ENCODE measurements at regions of chr5 and their contacts with region 1.

Region 1: GRCh38 chr5:142548739-142549275 is 137.1 kb downstream of the FGF1 start:
- DNase-seq: peak; percentile 93
- H3K4me3 ChIP-seq: no peak overlapping the region
- CTCF ChIP-seq: peak; percentile 89

Region 2: GRCh38 chr5:142000703-142001484 is 547.9 kb before region 1 on chr5:
- in situ Hi-C with region 1: no loop called
- DNase-seq: no peak
- H3K4me3 ChIP-seq: no peak overlapping the region
- CTCF ChIP-seq: peak; percentile 43

Region 3: DNA sequence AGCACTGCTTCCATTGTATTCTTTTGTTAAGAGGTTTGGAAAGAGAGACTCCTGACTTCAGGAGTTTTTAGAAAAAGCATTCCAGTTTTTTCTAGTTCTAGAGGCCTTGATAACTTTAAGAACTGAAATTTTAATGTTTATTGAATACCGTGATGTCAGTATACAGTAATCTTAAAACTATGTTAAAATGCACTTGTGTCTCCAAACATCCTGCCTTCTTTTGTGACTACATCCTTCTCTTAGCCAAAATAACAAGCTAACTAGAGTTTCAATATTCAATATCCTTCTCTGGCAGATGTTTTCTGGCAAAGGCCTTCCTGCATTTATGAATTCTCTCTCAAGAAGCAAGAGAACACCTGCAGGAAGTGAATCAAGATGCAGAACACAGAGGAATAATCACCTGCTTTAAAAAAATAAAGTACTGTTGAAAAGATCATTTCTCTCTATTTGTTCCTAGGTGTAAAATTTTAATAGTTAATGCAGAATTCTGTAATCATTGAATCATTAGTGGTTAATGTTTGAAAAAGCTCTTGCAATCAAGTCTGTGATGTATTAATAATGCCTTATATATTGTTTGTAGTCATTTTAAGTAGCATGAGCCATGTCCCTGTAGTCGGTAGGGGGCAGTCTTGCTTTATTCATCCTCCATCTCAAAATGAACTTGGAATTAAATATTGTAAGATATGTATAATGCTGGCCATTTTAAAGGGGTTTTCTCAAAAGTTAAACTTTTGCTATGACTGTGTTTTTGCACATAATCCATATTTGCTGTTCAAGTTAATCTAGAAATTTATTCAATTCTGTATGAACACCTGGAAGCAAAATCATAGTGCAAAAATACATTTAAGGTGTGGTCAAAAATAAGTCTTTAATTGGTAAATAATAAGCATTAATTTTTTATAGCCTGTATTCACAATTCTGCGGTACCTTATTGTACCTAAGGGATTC is 397.1 kb before region 1 on chr5:
- in situ Hi-C with region 1: loop called (anchors 5 kb)
- DNase-seq: peak; percentile 80
- H3K4me3 ChIP-seq: no peak overlapping the region
- CTCF ChIP-seq: peak; percentile 73

Region 4: DNA sequence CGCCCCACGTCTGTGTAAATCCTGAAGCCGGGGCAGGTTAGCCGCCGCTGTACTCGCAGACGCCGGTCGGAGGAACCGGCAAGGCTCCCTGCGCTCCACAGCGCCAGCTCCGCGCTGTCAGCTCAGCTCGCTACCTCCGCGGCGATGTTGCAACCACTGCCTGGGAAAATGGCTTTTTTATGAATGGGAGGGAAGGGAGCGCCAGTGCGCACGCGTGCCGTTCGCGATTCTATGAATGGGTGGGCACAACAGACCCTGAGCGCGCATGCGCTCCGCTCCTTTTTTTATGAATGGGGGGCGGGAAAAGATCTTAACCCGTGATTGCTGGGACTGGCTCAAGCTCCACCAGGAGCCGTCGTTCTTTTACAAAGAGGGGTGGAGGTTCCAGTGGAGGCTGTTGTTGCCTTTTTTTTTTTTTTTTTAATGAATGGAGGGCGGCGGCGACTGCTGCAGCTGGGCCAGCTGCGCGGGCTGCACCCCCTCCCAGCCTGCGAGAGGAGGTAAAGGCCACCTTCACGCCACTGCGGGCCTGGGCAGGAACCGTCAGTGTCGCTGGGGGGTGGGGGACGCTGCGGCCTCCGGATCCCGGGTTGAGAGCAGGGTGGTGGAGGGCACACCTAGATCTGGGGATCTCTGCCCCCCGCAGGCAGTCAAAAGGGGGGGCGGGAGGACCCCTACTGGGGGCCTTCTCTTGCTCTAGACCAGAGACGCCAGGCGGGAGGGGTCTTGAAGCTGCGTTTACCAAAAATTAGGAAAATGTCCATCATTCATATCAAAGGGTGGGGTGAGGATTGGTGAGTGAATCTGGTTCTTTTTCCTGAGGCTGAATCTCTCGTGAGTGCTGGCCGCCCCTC is 223.7 kb before region 1 on chr5 and contains the start of gene SPRY4:
- in situ Hi-C with region 1: loop called (anchors 25 kb)
- DNase-seq: peak; percentile 97
- H3K4me3 ChIP-seq: peak within 1 kb of the TSS; percentile 78
- CTCF ChIP-seq: no peak

Region 5: DNA sequence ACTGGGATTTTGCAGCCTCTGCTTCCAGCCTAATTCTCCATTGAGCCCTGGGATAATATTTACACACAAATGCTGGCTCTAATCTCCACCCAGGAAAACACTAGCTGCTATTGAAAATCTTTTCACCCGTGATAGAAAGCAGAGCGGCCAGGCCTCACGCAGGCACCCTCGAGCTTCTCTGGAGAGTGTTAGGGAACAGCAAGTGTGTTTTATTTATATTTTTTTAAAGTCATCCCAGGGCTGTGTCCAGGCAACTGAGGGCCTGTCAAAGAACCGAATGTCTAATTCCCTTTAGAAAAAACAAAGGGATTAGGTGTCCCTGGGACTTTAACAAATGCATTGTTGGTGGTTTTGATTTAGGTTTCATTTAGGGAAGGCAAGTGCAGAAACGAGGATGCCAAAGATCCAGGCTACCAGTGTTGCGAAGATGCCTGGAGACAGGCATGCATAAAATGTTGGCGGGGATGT is 172.8 kb before region 1 on chr5:
- in situ Hi-C with region 1: loop called (anchors 10 kb)
- DNase-seq: no peak
- H3K4me3 ChIP-seq: no peak overlapping the region
- CTCF ChIP-seq: no peak

Region 6: DNA sequence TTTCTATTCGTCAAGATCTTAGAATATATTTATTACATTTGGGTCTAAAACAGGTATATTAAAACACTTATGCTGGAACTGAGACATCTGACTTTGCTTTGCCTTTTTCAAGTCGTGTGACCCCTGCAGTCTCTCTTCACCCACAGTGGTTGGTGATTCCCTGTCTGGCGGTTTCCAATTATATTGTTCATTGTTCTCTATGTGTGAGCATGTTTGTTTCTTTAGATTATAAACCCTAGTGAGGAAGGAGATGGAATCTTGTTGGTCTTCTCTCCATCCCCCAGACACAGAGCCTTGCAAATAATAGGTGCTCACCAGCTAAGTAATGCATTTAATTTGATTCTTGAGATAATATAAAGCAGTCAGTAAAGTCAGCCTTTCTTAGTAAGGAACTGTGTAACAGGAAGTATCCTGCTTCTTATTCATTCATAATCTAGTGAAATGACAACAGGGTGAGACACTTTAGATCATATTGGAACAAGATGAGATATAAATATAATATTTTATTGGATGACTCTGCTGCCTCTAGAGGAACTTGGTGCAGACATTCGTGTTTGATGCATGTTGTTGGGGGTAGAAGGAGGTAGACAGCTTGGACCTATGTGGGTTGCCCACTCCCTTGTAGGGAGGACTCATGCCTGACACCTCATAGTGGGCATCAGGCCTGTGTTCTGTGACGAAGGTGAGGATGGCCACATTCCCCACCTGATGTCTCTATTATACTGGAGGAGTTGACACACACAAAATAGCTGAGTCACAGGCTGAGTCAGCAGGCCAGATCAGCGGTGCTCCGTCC is 48.9 kb after region 1 on chr5:
- in situ Hi-C with region 1: no loop called
- DNase-seq: no peak
- H3K4me3 ChIP-seq: no peak overlapping the region
- CTCF ChIP-seq: peak; percentile 10

Measured in astrocyte of the cerebellum (primary cell).